K562 (cell line): ENCODE measurements at regions of chr20 and their contacts with region 1.

Region 1: GRCh38 chr20:39885975-39886649 is 802.9 kb downstream of the MAFB start:
- DNase-seq: peak in 2 of 4 experiments; percentile 7 to 20
- ATAC-seq: no peak
- H3K4me3 ChIP-seq: no peak overlapping the region
- H3K27ac ChIP-seq: no peak overlapping the region
- H3K4me1 ChIP-seq: no peaks in the 10 kb centered on the region
- H3K27me3 ChIP-seq: no peaks in the 10 kb centered on the region
- CTCF ChIP-seq: peak in 1 of 3 experiments; percentile 36; a peak in 3 of 6 replicates
- EP300 ChIP-seq: no peak
- POLR2A ChIP-seq: no peak
- RAD21 ChIP-seq: peak; percentile 8 to 36; a peak in 1 of 4 replicates

Region 2: GRCh38 chr20:39638731-39639130 is 247.4 kb before region 1 on chr20:
- CTCF ChIA-PET with region 1: no interaction called
- POLR2A ChIA-PET with region 1: no interaction called
- in situ Hi-C with region 1: no loop called
- intact Hi-C with region 1: no loop called
- DNase-seq: no peak
- ATAC-seq: no peak
- H3K4me3 ChIP-seq: no peak overlapping the region
- H3K27ac ChIP-seq: no peak overlapping the region
- H3K4me1 ChIP-seq: no peaks in the 10 kb centered on the region
- H3K27me3 ChIP-seq: no peaks in the 10 kb centered on the region
- CTCF ChIP-seq: no peak
- EP300 ChIP-seq: no peak
- POLR2A ChIP-seq: no peak
- RAD21 ChIP-seq: no peak

Region 3: DNA sequence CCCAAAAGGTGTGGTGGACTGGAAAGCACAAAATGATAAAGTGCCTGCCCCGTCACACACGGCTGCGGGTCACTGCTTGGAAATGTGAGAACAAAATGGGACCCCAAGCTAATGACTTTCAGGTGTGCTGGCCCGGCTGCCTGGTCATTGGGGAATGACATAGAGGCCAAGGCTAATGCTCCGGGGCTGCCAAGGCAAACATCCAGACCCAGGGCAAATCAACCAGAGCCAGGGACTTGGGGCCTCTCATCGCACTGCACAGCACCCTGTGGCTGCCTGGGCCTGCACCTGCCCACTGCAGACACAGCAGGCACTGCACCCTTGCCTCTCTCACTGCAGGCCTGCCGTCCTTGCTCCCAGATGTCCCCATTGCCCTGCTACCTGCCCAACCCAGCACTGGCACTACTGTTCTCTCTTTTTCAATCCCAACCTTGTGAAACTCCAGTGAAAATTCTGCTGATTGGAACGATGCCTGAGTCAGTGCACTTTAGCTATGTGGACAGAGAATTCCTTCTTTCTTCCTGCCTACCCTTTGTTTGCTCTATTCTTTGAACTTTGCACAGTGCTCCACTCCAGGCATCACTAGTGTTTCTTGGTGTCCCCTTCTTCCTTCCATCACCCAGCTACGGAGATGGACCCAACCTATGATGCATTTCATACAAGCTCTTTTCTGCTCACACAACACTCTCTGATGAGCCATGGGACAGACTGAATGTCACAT is 46.6 kb before region 1 on chr20:
- CTCF ChIA-PET with region 1: no interaction called
- POLR2A ChIA-PET with region 1: no interaction called
- in situ Hi-C with region 1: no loop called
- intact Hi-C with region 1: no loop called
- DNase-seq: no peak
- ATAC-seq: no peak
- H3K4me3 ChIP-seq: no peak overlapping the region
- H3K27ac ChIP-seq: no peak overlapping the region
- H3K4me1 ChIP-seq: no peaks in the 10 kb centered on the region
- H3K27me3 ChIP-seq: no peaks in the 10 kb centered on the region
- CTCF ChIP-seq: no peak
- EP300 ChIP-seq: no peak
- POLR2A ChIP-seq: no peak
- RAD21 ChIP-seq: no peak

Region 4: GRCh38 chr20:40689943-40690835 is 804.1 kb after region 1 on chr20:
- CTCF ChIA-PET with region 1: no interaction called
- POLR2A ChIA-PET with region 1: no interaction called
- in situ Hi-C with region 1: no loop called
- intact Hi-C with region 1: loop called (anchors 10 kb)
- DNase-seq: peak; percentile 59 to 68 (median 66)
- ATAC-seq: peak; percentile 91
- H3K4me3 ChIP-seq: peak overlapping the region; percentile 9; the same call in 1 of the 2 replicates
- H3K27ac ChIP-seq: no peak overlapping the region
- H3K4me1 ChIP-seq: peaks cover 0 to 25% of the 10 kb centered on the region in 2 experiments; a peak in 2 of 5 replicates
- H3K27me3 ChIP-seq: peaks cover 9 to 37% of the 10 kb centered on the region in 2 experiments; a peak in 3 of 5 replicates
- CTCF ChIP-seq: peak; percentile 67 to 77 (median 72)
- EP300 ChIP-seq: no peak
- POLR2A ChIP-seq: no peak
- RAD21 ChIP-seq: peak; percentile 9 to 57; a peak in 2 of 4 replicates